ENCODE measurements at regions of chr17 and their contacts with region 1.

Region 1: DNA sequence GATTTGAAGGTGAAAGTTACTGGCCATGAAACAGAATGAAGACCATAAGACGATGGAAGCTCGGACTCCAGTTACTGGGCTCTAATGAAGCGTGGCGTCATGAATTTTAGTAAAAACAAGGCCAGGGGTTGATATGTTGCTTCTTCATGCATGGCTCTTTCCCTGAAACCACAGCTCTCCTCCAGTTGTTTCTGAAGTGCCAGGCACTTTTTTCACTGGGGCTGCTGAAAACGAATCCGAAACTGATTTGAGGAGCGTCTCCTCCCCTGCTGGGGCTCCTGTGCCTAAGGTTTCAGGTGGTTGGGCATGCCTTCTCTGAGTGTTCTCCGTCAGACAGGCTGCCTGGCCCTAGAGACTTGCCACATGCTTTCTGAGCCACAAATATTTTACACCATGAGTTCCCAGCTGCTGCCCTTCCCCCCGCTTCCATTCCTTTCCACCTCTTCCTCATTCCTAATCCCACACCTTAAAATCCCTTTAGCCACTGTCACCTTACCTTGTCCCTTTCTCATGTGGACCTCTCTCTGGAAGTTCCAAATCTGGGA is 3.7 kb upstream of the MYL4 start:
- DNase-seq: peak; percentile 82
- ATAC-seq: peak; percentile 79
- H3K4me3 Mint-ChIP-seq: peak overlapping the region; percentile 66
- H3K27ac Mint-ChIP-seq: peak overlapping the region; percentile 89
- H3K4me1 Mint-ChIP-seq: peaks cover 53% of the 10 kb centered on the region
- H3K27me3 Mint-ChIP-seq: peaks cover 3% of the 10 kb centered on the region

Region 2: GRCh38 chr17:47220531-47220999 is 15.1 kb after region 1 on chr17:
- CTCF ChIA-PET with region 1: interaction called, 9 read pairs
- POLR2A ChIA-PET with region 1: interaction called, 19 read pairs
- DNase-seq: peak; percentile 74
- ATAC-seq: peak; percentile 57
- H3K4me3 Mint-ChIP-seq: peak overlapping the region; percentile 29
- H3K27ac Mint-ChIP-seq: peak overlapping the region; percentile 84
- H3K4me1 Mint-ChIP-seq: peaks cover 67% of the 10 kb centered on the region
- H3K27me3 Mint-ChIP-seq: no peaks in the 10 kb centered on the region

Region 3: DNA sequence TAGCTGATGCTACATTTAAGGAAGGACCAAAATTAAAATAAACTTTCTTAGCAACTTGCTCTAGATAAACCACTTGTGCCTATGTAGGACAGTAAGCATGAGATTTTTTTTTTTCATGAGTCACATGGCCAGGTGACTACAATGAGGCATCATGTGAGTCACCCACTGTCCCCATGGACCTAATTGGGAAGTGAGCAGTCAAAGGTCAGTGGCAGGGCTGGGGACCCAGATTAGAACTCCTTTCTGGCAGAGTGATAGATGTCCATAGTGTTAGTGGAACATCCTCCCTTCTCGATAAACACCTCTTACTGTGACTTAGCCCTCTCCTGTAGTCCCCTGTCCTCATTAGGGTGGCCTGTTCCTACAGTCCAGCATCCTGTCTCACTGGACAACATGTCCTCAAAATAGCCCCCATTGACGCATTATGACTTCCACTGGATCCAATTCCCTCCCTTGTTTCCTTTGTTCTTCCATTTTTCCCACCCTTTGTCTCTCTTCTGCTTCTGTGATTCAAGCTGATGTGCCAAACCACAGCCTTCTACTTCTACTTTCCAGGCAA is 60.6 kb after region 1 on chr17:
- CTCF ChIA-PET with region 1: no interaction called
- POLR2A ChIA-PET with region 1: no interaction called
- DNase-seq: no peak
- ATAC-seq: no peak
- H3K4me3 Mint-ChIP-seq: no peak overlapping the region
- H3K27ac Mint-ChIP-seq: no peak overlapping the region
- H3K4me1 Mint-ChIP-seq: no peaks in the 10 kb centered on the region
- H3K27me3 Mint-ChIP-seq: peaks cover 24% of the 10 kb centered on the region